ENCODE measurements at regions of chr10 and their contacts with region 1.

Region 1: GRCh38 chr10:80509403-80510161 is 28.1 kb upstream of the SH2D4B start:
- DNase-seq: no peak
- ATAC-seq: no peak
- H3K4me3 Mint-ChIP-seq: no peak overlapping the region
- H3K27ac Mint-ChIP-seq: peak overlapping the region; percentile 53
- H3K4me1 Mint-ChIP-seq: peaks cover 30% of the 10 kb centered on the region
- H3K27me3 Mint-ChIP-seq: no peaks in the 10 kb centered on the region
- CTCF ChIP-seq: no peak

Region 2: DNA sequence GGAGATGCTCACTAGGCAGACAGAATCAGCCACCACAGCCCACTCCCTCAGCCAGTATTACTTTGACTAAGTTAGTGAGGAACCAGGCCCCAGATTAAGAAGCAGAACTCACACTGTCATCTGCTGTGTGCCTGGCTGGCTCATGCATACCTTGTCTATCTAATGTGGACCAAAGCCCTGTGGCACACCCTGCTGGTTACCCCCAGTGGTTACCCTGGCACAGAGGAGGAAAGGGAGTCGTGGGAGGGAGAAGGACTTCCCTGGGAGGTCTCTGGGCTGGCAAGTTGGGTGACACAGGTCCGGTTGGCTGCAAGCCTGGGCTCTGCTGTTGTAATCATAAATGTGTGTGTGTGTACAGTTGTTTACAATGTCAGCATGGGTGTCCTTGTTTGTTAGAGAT is 20.7 kb after region 1 on chr10:
- CTCF ChIA-PET with region 1: interaction called, 29 read pairs
- POLR2A ChIA-PET with region 1: interaction called, 4 read pairs
- intact Hi-C with region 1: no loop called
- DNase-seq: peak; percentile 78
- ATAC-seq: peak; percentile 90
- H3K4me3 Mint-ChIP-seq: peak overlapping the region; percentile 27
- H3K27ac Mint-ChIP-seq: peak overlapping the region; percentile 85
- H3K4me1 Mint-ChIP-seq: peaks cover 65% of the 10 kb centered on the region
- H3K27me3 Mint-ChIP-seq: no peaks in the 10 kb centered on the region
- CTCF ChIP-seq: peak; percentile 47